ENCODE measurements at regions of chr7 and their contacts with region 1.

Region 1: GRCh38 chr7:23373151-23374004 is 74.2 kb downstream of the MALSU1 start:
- DNase-seq: peak; percentile 88
- H3K4me3 Mint-ChIP-seq: no peak overlapping the region
- H3K27ac Mint-ChIP-seq: peak overlapping the region; percentile 83
- H3K4me1 Mint-ChIP-seq: peaks cover 48% of the 10 kb centered on the region
- H3K27me3 Mint-ChIP-seq: peaks cover 6% of the 10 kb centered on the region

Region 2: DNA sequence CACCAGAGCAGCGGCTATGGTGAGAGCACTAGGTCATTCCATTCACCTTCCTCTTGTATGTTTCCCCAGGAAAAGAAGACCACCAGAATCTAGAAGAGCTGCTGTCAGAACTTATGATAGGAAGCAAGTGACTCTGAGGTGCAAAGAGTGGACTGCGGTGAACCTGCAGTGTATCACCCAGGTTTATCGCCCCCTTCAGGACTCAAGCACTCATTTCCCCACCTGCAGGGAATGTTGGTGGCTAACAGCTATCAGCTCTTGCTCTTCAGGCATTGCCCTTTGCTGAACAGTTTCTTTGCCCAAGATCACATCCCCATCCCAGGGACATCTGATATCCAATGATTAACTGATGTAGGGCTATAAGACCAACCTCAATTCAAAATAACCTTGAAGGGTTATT is 712.6 kb before region 1 on chr7:
- CTCF ChIA-PET with region 1: no interaction called
- intact Hi-C with region 1: loop called (anchors 10 kb)
- DNase-seq: peak; percentile 28
- H3K4me3 Mint-ChIP-seq: no peak overlapping the region
- H3K27ac Mint-ChIP-seq: no peak overlapping the region
- H3K4me1 Mint-ChIP-seq: peaks cover 36% of the 10 kb centered on the region
- H3K27me3 Mint-ChIP-seq: no peaks in the 10 kb centered on the region

Region 3: GRCh38 chr7:23298885-23299769 is 74.3 kb before region 1 on chr7 and contains the start of gene MALSU1:
- CTCF ChIA-PET with region 1: no interaction called
- intact Hi-C with region 1: loop called (anchors 1 kb)
- DNase-seq: peak; percentile 99
- H3K4me3 Mint-ChIP-seq: peak within 1 kb of the TSS; percentile 96
- H3K27ac Mint-ChIP-seq: peak within 1 kb of the TSS; percentile 95
- H3K4me1 Mint-ChIP-seq: peaks cover 30% of the 10 kb centered on the region
- H3K27me3 Mint-ChIP-seq: no peaks in the 10 kb centered on the region
- total RNA-seq, gene MALSU1: 98.4 to 101 TPM

Region 4: GRCh38 chr7:23357190-23358093 is 15.9 kb before region 1 on chr7:
- CTCF ChIA-PET with region 1: interaction called, 10 read pairs
- intact Hi-C with region 1: loop called (anchors 1 kb)
- DNase-seq: no peak
- H3K4me3 Mint-ChIP-seq: no peak overlapping the region
- H3K27ac Mint-ChIP-seq: no peak overlapping the region
- H3K4me1 Mint-ChIP-seq: peaks cover 15% of the 10 kb centered on the region
- H3K27me3 Mint-ChIP-seq: peaks cover 3% of the 10 kb centered on the region

Region 5: DNA sequence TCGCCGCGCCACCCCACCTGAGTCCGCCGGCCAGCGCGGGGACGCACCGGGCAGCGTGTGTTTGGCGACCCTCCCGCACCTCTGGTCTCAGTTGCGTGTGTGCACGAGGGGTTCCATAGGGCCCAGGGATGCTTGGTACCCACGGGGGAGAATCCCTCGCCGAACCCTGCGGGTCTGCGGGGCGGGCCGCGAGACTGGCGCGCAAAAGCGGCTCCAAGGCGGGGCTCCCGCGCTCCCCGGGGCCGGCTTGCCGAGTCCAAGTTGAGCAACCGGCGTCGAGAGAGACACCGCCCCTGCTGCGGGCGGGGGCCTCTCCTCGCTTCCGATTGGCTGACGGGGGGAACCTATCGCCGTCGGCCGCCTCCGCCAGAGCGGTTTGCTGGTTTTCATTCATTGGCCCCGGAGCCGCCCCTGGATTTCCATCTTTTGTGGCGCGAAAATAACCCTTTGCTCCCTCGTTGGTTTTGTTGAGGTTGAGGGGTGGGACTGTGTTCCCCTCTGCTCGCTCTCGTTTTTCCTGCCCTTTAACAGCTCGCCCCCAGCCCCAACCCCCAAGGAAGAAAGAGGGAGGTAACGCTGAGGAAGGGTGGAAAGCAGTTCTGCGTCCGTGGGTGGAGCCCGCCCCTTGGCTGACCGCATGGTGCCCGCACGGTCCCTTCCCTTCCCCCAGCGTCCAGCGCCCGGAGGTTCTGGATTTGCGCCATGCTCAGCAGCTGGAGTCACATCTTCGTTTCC is 100.9 kb after region 1 on chr7:
- CTCF ChIA-PET with region 1: no interaction called
- intact Hi-C with region 1: loop called (anchors 1 kb)
- DNase-seq: peak; percentile 91
- H3K4me3 Mint-ChIP-seq: peak overlapping the region; percentile 76
- H3K27ac Mint-ChIP-seq: peak overlapping the region; percentile 30
- H3K4me1 Mint-ChIP-seq: peaks cover 22% of the 10 kb centered on the region
- H3K27me3 Mint-ChIP-seq: peaks cover 57% of the 10 kb centered on the region

Region 6: GRCh38 chr7:23928418-23928775 is 555.0 kb after region 1 on chr7:
- CTCF ChIA-PET with region 1: no interaction called
- intact Hi-C with region 1: no loop called
- DNase-seq: no peak
- H3K4me3 Mint-ChIP-seq: no peak overlapping the region
- H3K27ac Mint-ChIP-seq: no peak overlapping the region
- H3K4me1 Mint-ChIP-seq: no peaks in the 10 kb centered on the region
- H3K27me3 Mint-ChIP-seq: peaks cover 2% of the 10 kb centered on the region

Region 7: DNA sequence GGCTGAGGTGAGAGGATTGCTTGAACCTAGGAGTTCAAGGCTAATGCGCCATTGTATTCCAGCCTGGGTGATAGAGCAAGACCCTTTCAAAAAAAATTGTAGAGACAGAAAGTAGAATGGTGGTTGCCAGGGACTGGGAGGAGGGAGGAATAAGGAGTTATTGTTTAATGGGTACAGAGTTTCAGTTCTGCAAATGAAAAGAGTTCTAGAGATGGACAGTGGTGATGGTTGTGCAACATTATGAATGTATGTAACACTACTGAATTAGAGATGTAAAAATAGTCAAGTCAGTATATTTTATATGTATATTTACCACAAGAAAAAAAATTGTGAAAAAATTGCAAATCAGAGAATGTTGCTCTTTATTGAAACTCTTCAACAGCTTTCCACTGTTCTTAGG is 644.1 kb after region 1 on chr7:
- CTCF ChIA-PET with region 1: no interaction called
- intact Hi-C with region 1: no loop called
- DNase-seq: no peak
- H3K4me3 Mint-ChIP-seq: no peak overlapping the region
- H3K27ac Mint-ChIP-seq: no peak overlapping the region
- H3K4me1 Mint-ChIP-seq: no peaks in the 10 kb centered on the region
- H3K27me3 Mint-ChIP-seq: peaks cover 2% of the 10 kb centered on the region

Region 8: DNA sequence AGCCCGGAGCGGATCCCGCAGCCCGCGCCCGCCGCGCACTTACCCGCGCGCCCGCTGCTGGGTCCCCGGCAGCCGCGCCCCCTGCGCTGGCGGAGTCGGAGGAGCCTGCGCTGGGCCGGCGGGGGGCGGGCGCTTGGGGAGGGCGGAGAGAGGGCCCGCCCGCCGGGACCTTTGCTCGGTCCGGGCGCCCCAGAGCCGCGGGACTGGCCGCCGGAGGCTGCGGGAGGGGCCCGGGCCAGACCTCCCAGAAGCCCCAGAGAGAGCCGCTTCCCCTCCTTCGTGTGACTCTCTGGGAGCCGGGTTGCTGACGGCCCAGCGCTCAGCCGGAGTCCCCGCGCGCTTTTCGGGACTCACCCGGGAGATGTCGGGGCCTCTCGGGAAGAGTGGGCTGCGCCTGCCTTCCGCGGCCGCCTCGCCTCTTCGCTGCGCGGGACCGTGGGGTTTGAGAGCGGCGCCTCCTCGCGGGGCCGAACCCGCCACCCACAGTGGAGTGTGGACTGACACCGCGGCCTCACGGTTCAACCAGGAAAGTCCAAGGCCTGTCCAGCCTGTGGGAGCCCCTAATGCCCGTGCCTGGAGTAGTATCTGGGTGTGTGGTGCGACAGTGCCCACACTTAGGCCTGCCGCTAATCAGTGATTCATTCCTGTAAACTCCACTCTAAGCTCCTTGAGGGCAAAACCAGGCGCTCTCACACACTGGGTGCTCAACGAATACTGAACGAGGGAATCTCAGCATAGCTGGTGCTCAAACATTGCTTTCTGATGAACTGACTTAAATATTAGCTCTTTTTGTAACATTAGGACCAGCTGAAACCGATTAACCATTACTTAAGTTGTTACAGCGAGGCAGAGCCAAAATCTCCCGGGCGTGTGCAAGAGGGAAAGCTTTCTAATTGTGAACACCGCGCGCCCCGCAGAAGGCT is 1384.2 kb after region 1 on chr7 and contains the start of gene GSDME:
- CTCF ChIA-PET with region 1: no interaction called
- intact Hi-C with region 1: loop called (anchors 10 kb)
- DNase-seq: no peak
- H3K4me3 Mint-ChIP-seq: peak within 1 kb of the TSS; percentile 85
- H3K27ac Mint-ChIP-seq: peak within 1 kb of the TSS; percentile 88
- H3K4me1 Mint-ChIP-seq: peaks cover 33% of the 10 kb centered on the region
- H3K27me3 Mint-ChIP-seq: peaks cover 39% of the 10 kb centered on the region
- total RNA-seq, gene GSDME: 6.8 to 6.9 TPM